MCF 10A (cell line): ENCODE measurements at regions of chr20 and their contacts with region 1.

Region 1: DNA sequence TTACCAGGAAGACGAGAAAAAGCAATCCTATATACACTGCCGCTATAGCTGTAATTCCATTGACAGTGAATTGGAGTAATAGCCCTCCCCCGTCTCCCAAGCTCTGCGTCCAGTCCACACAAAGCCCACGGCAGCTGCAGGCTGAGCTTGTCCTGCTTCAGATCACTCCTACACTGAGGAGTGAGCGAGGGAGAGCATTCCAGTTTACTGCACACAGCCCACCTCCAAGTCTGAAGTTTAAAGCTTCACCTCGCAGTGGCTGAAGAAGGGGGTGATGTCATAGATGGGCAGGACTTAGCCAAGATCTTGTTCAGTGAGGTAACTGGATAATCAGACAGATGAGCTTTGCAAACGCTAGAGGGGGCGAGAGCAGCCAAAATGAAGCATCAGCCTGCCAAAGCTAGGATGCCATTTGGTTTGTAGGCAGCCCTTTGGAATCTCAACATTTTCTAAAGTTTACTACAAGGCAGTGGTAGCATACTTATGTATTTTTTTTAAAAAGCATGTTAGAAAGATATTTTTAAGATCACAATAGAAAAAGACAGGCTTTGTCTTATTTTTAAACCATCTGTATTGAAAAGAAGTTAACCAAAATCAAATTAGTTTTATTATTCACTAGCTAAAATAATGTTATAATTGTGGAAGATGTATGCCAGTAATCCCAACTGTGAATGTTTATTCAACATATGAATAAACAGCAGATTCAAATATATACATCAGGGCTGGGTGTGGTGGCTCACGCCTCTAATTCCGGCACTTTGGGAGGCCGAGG is at the start of gene FLRT3:
- DNase-seq: peak; percentile 97
- H3K4me3 Mint-ChIP-seq: peak within 1 kb of the TSS; percentile 74
- H3K27ac Mint-ChIP-seq: peak within 1 kb of the TSS; percentile 84
- H3K4me1 Mint-ChIP-seq: no peaks in the 10 kb centered on the region
- H3K27me3 Mint-ChIP-seq: no peaks in the 10 kb centered on the region
- CTCF ChIP-seq: peak; percentile 89
- total RNA-seq, gene FLRT3: 13.3 and 15.7 TPM in 2 replicates

Region 2: GRCh38 chr20:14142171-14142570 is 195.4 kb before region 1 on chr20:
- CTCF ChIA-PET with region 1: interaction called, 12 read pairs
- POLR2A ChIA-PET with region 1: interaction called, 27 read pairs
- intact Hi-C with region 1: loop called (anchors 1 kb)
- DNase-seq: peak; percentile 48
- H3K4me3 Mint-ChIP-seq: no peak overlapping the region
- H3K27ac Mint-ChIP-seq: no peak overlapping the region
- H3K4me1 Mint-ChIP-seq: no peaks in the 10 kb centered on the region
- H3K27me3 Mint-ChIP-seq: no peaks in the 10 kb centered on the region
- CTCF ChIP-seq: peak; percentile 64

Region 3: GRCh38 chr20:14477125-14477524 is 139.5 kb after region 1 on chr20:
- CTCF ChIA-PET with region 1: no interaction called
- POLR2A ChIA-PET with region 1: interaction called, 4 read pairs
- intact Hi-C with region 1: loop called (anchors 5 kb)
- DNase-seq: peak; percentile 65
- H3K4me3 Mint-ChIP-seq: no peak overlapping the region
- H3K27ac Mint-ChIP-seq: no peak overlapping the region
- H3K4me1 Mint-ChIP-seq: peaks cover 18% of the 10 kb centered on the region
- H3K27me3 Mint-ChIP-seq: no peaks in the 10 kb centered on the region
- CTCF ChIP-seq: no peak

Region 4: DNA sequence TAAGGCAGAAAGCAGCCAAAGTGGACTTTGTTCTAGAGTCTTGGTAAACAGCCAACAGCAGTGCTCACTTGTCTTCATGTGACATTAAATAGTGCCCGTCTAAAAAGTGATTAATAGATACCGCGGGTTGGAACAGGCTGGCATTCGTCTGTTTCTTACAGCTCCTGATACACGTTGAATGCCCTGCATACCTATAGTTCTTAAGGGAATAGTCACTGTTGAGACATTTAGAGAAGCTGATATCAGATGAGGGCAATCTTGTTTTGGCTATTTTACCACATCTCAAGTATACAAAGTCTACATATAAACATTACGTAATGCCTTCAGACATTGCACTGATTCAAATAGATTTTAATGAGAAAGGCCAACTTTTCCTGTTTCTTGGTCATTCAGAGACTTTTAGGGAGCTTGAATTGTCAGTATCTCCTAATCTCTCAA is 374.7 kb after region 1 on chr20:
- CTCF ChIA-PET with region 1: interaction called, 18 read pairs
- POLR2A ChIA-PET with region 1: interaction called, 66 read pairs
- intact Hi-C with region 1: loop called (anchors 5 kb)
- DNase-seq: peak; percentile 35
- H3K4me3 Mint-ChIP-seq: no peak overlapping the region
- H3K27ac Mint-ChIP-seq: peak overlapping the region; percentile 86
- H3K4me1 Mint-ChIP-seq: peaks cover 26% of the 10 kb centered on the region
- H3K27me3 Mint-ChIP-seq: no peaks in the 10 kb centered on the region
- CTCF ChIP-seq: no peak

Region 5: DNA sequence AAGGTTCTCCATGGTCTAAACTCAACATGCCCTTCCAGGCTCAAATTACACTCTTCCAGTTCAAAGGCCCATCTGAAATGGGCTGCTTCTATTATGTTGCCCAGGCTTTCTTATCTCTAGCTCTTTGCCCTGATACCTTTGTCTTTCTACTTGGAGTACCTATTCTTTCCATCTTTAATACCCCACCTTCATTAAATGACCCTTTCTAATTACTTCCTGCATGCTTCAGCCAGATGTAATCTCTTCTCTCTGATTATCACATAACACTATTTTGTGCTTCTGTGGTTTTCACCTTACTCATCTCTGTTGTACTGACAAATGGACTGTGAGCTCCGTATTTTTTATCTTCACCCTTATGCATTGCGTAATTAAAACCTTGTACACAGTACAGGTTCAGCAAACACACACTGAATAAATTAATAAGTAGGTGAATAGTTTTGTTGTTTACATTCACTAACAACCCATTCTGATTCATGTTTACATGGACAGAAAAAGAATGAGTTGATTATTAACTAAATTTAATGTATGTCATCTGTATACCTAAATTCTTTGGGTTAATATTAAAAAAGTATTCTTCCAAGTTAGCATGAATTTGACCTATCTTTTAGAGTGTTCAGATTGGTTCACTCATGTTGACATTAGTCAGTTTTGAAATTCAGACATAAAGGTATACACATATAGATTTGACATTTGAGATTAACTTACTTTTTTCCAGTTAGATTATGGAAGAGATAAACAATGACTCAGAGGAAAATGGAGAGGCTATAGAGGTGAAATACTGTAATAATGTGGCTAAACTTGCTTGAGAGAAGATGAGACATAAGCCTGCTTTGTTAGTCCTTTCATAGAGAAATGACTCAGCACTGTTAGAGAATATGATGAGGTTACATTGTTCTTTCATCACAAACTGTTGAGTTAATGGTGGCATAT is 541.4 kb after region 1 on chr20:
- CTCF ChIA-PET with region 1: interaction called, 4 read pairs
- POLR2A ChIA-PET with region 1: interaction called, 6 read pairs
- intact Hi-C with region 1: loop called (anchors 10 kb)
- DNase-seq: peak; percentile 74
- H3K4me3 Mint-ChIP-seq: no peak overlapping the region
- H3K27ac Mint-ChIP-seq: peak overlapping the region; percentile 1
- H3K4me1 Mint-ChIP-seq: peaks cover 17% of the 10 kb centered on the region
- H3K27me3 Mint-ChIP-seq: no peaks in the 10 kb centered on the region
- CTCF ChIP-seq: no peak

Region 6: GRCh38 chr20:15045246-15045645 is 707.7 kb after region 1 on chr20:
- CTCF ChIA-PET with region 1: interaction called, 20 read pairs
- POLR2A ChIA-PET with region 1: interaction called, 74 read pairs
- intact Hi-C with region 1: no loop called
- DNase-seq: peak; percentile 89
- H3K4me3 Mint-ChIP-seq: peak overlapping the region; percentile 49
- H3K27ac Mint-ChIP-seq: peak overlapping the region; percentile 92
- H3K4me1 Mint-ChIP-seq: peaks cover 37% of the 10 kb centered on the region
- H3K27me3 Mint-ChIP-seq: no peaks in the 10 kb centered on the region
- CTCF ChIP-seq: no peak

Region 7: DNA sequence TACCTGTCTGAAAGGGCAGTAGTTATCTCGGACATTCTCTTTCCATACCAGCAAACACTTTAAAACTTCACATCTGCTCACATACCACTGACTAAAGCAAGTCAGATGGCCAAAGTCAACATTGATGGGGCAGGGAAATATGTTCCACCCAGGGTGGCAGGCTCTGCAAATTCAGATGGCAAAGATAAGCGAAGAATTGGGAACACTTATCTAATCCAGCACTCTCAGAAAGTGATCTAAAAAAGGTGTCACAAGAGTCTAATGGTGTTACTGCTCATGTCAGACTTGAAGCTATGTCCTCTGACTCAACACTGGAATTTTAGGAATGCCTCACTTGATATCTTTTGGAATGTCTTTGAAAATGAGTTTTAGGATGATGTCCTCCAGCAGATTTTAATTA is 1149.4 kb after region 1 on chr20:
- CTCF ChIA-PET with region 1: no interaction called
- POLR2A ChIA-PET with region 1: no interaction called
- intact Hi-C with region 1: loop called (anchors 5 kb)
- DNase-seq: no peak
- H3K4me3 Mint-ChIP-seq: no peak overlapping the region
- H3K27ac Mint-ChIP-seq: no peak overlapping the region
- H3K4me1 Mint-ChIP-seq: peaks cover 11% of the 10 kb centered on the region
- H3K27me3 Mint-ChIP-seq: no peaks in the 10 kb centered on the region
- CTCF ChIP-seq: no peak